T-cell (primary cell): ENCODE measurements at regions of chr6 and their contacts with region 1.

Region 1: DNA sequence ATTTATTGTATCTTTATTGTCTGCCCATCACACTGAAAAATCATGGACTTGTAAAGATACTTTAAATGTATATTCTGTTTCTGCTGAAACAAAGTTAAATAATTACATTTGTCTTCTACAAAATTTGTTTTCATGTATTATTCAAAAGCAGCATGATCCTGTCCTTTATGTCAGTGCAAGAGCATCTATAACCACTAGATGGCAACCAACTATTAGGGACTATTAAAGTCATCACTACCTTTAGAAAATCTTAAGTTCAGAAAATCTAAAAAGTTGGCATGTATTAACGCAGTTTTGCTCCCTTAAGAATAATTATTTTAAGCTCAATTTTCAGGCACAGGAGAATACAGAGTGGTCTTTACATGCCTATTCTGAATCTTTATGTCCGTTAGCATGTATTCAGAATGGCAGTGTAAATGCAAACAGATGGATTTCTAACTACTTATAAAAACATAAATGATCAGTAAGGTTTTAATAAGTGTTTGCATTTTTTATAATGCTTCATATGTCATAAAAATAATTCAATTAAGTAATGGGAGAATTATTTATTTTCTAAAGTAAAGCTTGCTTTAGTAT is 17.8 kb downstream of the TMEM30A start:
- DNase-seq: peak in 2 of 35 experiments; percentile 2 to 64
- ATAC-seq: peak in 3 of 4 experiments; percentile 48 to 75 (median 57)
- H3K4me3 ChIP-seq: no peak overlapping the region
- H3K4me3 Mint-ChIP-seq: no peak overlapping the region
- H3K27ac ChIP-seq: no peak overlapping the region
- H3K27ac Mint-ChIP-seq: no peak overlapping the region
- H3K4me1 ChIP-seq: no peaks in the 10 kb centered on the region
- H3K4me1 Mint-ChIP-seq: peaks cover 13 to 45% (median 41%) of the 10 kb centered on the region in 3 donors
- H3K27me3 ChIP-seq: no peaks in the 10 kb centered on the region
- H3K27me3 Mint-ChIP-seq: no peaks in the 10 kb centered on the region

Region 2: GRCh38 chr6:75278474-75279077 is 11.8 kb after region 1 on chr6:
- CTCF ChIA-PET with region 1: interaction called, 5 to 40 read pairs
- POLR2A ChIA-PET with region 1: no interaction called
- DNase-seq: no peak
- ATAC-seq: no peak
- H3K4me3 ChIP-seq: no peak overlapping the region
- H3K4me3 Mint-ChIP-seq: peak overlapping the region in 1 of 3 donors; percentile 0
- H3K27ac ChIP-seq: no peak overlapping the region
- H3K27ac Mint-ChIP-seq: peak overlapping the region; percentile 2 to 17
- H3K4me1 ChIP-seq: peaks cover 12% of the 10 kb centered on the region in 2 experiments
- H3K4me1 Mint-ChIP-seq: peaks cover 75 to 79% (median 77%) of the 10 kb centered on the region in 3 donors
- H3K27me3 ChIP-seq: no peaks in the 10 kb centered on the region
- H3K27me3 Mint-ChIP-seq: no peaks in the 10 kb centered on the region

Region 3: DNA sequence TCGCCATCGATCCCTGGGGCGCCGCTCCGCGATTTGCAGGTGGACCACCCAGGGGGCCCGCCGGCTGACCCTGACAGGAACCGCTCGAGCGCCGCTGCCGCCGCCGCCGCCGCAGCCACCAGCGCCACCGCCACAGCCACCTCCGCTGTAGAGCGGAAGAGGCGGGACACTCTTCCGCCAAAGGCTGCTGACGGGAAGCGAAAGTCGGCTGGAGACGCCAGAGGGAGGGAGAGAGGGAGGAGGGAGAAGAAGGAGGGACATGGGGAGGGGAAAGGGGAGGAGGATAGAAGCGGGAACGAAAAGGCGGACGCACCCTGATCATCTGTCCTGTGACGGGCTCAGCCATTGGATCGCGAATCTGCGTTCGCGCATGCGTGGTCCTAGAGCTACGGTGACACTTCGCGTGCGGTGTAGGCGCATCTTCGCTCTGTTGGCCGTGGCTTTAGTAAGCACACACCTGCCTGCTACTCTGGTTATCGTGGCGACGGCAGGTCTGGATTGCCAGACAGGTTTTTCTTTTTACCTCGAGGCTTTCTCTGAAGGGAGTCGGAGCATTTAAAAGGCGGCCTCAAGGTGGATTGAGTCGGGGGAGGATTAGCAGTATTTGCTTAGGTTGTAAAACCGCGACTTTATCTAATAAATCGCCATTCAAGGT is 18.0 kb after region 1 on chr6 and contains the start of gene TMEM30A:
- CTCF ChIA-PET with region 1: interaction called, 5 to 40 read pairs
- POLR2A ChIA-PET with region 1: interaction called, 3 to 4 read pairs
- DNase-seq: peak; percentile 81 to 99 (median 93)
- ATAC-seq: peak; percentile 93 to 97 (median 96)
- H3K4me3 ChIP-seq: peak within 1 kb of the TSS; percentile 74 to 91
- H3K4me3 Mint-ChIP-seq: no peak within 1 kb of the TSS
- H3K27ac ChIP-seq: peak within 1 kb of the TSS; percentile 79
- H3K27ac Mint-ChIP-seq: no peak within 1 kb of the TSS
- H3K4me1 ChIP-seq: peaks cover 8 to 20% of the 10 kb centered on the region in 2 experiments
- H3K4me1 Mint-ChIP-seq: peaks cover 28 to 51% (median 31%) of the 10 kb centered on the region in 3 donors
- H3K27me3 ChIP-seq: no peaks in the 10 kb centered on the region
- H3K27me3 Mint-ChIP-seq: no peaks in the 10 kb centered on the region
- total RNA-seq, gene TMEM30A: 43.4 to 67.6 (median 55.1) TPM

Region 4: DNA sequence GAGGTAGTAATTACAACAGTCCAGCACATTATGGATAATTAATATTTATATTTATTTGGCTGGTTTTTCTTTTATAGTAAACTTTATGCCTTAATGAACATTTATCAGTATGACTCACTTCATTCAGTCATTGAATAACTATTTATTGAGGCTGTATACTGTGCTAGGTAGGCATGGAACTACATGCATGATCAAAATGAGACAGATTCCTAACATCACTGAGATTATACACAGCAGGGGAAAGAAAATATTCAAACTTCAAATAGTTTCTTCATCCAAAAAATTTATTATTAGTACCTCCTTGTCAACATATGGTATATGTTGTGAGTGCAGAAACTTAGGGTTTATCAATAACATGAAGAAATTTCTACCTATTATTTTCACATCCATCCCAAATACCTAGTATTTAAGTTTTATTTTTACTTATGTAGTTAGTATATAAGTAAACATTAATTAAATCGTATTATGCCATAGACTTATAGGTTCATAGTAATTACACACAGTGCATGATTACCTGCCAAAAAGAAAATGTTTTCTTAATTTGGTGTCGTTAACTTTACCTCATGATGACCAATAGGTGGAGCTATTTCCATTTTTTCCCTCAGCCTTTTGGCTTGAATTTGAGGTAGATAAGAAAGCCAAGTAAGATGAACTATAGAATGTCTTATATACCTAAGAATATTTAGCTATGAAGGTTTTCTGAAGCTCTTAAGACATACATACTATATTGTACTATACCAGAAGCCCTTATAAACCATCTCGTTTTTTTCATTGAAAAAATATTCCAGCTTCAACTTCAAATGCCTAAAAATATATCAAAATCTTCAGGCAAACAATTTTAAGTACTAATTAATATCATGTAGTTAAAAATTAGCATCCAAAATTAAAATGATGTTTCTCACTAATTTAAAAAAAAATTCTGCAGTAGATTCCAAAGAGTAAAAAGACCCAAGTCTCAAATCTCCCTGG is 30.3 kb after region 1 on chr6:
- CTCF ChIA-PET with region 1: interaction called, 3 to 13 read pairs
- POLR2A ChIA-PET with region 1: no interaction called
- DNase-seq: peak in 1 of 35 experiments; percentile 79
- ATAC-seq: peak; percentile 41 to 60 (median 43)
- H3K4me3 ChIP-seq: no peak overlapping the region
- H3K4me3 Mint-ChIP-seq: no peak overlapping the region
- H3K27ac ChIP-seq: no peak overlapping the region
- H3K27ac Mint-ChIP-seq: no peak overlapping the region
- H3K4me1 ChIP-seq: no peaks in the 10 kb centered on the region
- H3K4me1 Mint-ChIP-seq: no peaks in the 10 kb centered on the region
- H3K27me3 ChIP-seq: no peaks in the 10 kb centered on the region
- H3K27me3 Mint-ChIP-seq: no peaks in the 10 kb centered on the region

Region 5: DNA sequence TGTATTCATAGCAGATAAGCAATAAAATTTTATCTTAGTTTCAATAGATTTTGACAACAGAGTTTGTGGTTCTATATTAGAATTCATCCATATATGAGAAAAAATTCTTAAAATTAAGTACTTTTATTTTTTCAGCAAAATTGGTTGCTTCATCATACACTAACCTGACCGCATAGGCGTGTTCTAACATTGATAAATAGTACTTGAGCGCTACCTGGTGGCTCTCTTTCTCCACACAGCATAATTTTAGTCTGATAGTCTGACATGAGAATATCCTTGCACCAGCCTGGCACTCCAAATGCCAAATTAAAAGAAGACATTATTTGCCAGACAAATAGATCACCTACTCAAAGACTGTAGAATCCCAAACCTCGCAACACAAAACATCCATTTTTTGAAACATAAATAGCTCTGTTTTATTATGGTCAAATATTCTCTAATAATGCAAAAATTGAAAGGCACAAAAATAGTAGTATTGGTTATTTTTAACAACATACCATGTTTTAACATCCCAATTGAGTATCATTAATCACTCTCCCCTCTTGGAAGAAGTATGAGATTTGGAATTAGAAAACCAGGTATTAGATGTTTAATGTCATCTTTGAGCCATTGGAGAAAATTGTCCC is 259.8 kb after region 1 on chr6:
- CTCF ChIA-PET with region 1: interaction called, 8 to 23 read pairs
- POLR2A ChIA-PET with region 1: no interaction called
- DNase-seq: peak in 32 of 35 experiments; percentile 6 to 77 (median 40)
- ATAC-seq: peak; percentile 63 to 83 (median 66)
- H3K4me3 ChIP-seq: no peak overlapping the region
- H3K4me3 Mint-ChIP-seq: no peak overlapping the region
- H3K27ac ChIP-seq: no peak overlapping the region
- H3K27ac Mint-ChIP-seq: no peak overlapping the region
- H3K4me1 ChIP-seq: no peaks in the 10 kb centered on the region
- H3K4me1 Mint-ChIP-seq: no peaks in the 10 kb centered on the region
- H3K27me3 ChIP-seq: peaks cover 0 to 2% of the 10 kb centered on the region in 2 experiments
- H3K27me3 Mint-ChIP-seq: peaks cover 26 to 38% of the 10 kb centered on the region in 2 donors